RWPE1 (cell line): ENCODE measurements at regions of chr10 and their contacts with region 1.

Region 1: DNA sequence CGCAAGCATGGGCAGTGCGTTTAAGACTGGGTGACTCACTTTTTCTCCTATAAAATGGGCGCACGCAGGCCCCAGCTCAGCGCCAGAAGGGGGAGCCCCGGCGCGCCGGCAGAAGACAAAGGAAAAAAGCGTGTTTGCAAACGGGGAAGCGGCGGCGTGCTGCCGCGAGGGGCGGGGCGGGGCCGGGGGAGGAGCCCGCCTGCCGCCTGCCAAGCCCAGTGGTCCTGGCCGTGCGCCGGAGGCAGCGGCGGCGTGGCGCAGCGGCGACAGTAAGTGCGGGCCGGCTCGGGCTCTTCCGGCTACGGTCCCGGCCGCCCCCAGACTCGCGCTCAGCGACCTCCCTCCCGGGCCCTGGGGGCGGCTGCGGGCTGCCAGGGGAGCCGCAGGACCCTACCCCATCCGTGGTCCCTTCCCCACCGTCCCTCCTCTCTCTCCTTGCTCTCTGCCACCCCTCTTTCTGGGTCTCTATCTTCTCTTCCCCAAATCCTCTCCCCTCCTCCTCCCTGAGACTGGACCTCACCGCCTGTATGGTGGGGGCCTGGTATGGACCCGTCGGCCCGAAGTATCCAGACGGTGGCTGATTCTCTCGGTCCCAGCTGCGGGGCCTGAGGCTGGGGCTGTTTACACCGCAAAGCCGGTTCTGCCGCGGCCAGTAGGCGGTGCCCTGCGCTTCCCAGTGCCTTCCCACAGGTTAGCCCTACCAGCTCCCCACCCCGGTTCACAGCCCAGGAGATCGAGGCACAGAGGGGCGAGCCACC is at the start of gene SLC29A3:
- DNase-seq: peak; percentile 81
- H3K27ac ChIP-seq: peak within 1 kb of the TSS; percentile 27; the same call in 1 of the 2 replicates
- CTCF ChIP-seq: peak; percentile 76

Region 2: GRCh38 chr10:71138166-71138830 is 180.9 kb before region 1 on chr10:
- CTCF ChIA-PET with region 1: no interaction called
- POLR2A ChIA-PET with region 1: no interaction called
- DNase-seq: no peak
- H3K27ac ChIP-seq: no peak overlapping the region
- CTCF ChIP-seq: no peak

Region 3: DNA sequence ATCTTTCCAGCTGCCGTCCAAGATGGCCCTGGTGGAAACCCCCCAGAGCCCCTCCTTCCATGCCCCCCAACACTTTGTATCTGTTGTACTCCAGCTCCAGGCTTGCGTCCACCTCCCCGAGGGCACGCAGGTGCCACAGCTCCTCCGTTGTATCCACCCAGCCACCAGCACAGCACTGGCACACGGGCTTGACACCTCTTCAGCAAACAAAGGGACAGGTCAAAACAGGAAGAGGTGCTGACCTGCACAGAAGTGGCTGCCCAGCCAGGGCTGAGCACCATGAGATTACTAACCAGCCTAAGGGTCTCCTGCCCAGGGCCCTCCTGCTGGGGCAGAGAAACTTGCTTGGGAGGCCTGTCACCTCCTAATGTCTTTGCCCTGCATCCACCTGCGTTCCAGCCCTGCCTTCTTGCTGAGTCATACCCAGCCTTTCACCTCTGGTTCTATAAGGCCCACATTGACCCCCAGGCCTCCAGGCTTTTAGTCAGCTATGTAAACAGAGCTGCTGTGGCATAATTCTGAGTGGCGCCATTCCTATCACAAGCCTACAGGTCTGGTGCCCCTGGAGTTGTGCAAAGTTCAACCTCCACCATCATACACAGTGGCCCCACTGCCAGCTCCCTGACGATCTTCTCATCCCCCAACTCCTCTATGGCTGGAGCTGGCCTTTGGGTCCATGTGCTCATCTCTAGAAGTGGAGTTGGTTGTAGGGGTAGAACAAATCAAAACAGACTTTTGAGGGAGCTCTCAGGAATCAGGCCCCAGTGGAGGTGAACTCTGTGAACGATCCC is 20.8 kb after region 1 on chr10:
- CTCF ChIA-PET with region 1: interaction called, 12 read pairs
- POLR2A ChIA-PET with region 1: no interaction called
- DNase-seq: peak; percentile 88
- H3K27ac ChIP-seq: no peak overlapping the region
- CTCF ChIP-seq: no peak

Region 4: GRCh38 chr10:71367271-71367670 is 48.0 kb after region 1 on chr10:
- CTCF ChIA-PET with region 1: interaction called, 23 read pairs
- POLR2A ChIA-PET with region 1: interaction called, 3 read pairs
- DNase-seq: no peak
- H3K27ac ChIP-seq: no peak overlapping the region
- CTCF ChIP-seq: no peak

Region 5: GRCh38 chr10:71378336-71379117 is 59.3 kb after region 1 on chr10:
- CTCF ChIA-PET with region 1: interaction called, 18 read pairs
- POLR2A ChIA-PET with region 1: interaction called, 3 read pairs
- DNase-seq: no peak
- H3K27ac ChIP-seq: no peak overlapping the region
- CTCF ChIP-seq: no peak

Region 6: GRCh38 chr10:71494980-71495381 is 175.8 kb after region 1 on chr10:
- CTCF ChIA-PET with region 1: no interaction called
- POLR2A ChIA-PET with region 1: no interaction called
- DNase-seq: no peak
- H3K27ac ChIP-seq: no peak overlapping the region
- CTCF ChIP-seq: no peak

Region 7: GRCh38 chr10:71569775-71570588 is 250.8 kb after region 1 on chr10:
- CTCF ChIA-PET with region 1: interaction called, 27 read pairs
- POLR2A ChIA-PET with region 1: no interaction called
- DNase-seq: peak; percentile 78
- H3K27ac ChIP-seq: no peak overlapping the region
- CTCF ChIP-seq: peak; percentile 79